ENCODE measurements at regions of chr3 and their contacts with region 1.

Region 1: GRCh38 chr3:187679638-187680396 is 9.6 kb upstream of the SST start:
- DNase-seq: peak; percentile 68
- H3K4me3 Mint-ChIP-seq: no peak overlapping the region
- H3K27ac Mint-ChIP-seq: no peak overlapping the region
- H3K4me1 Mint-ChIP-seq: peaks cover 2% of the 10 kb centered on the region
- H3K27me3 Mint-ChIP-seq: peaks cover 59% of the 10 kb centered on the region

Region 2: DNA sequence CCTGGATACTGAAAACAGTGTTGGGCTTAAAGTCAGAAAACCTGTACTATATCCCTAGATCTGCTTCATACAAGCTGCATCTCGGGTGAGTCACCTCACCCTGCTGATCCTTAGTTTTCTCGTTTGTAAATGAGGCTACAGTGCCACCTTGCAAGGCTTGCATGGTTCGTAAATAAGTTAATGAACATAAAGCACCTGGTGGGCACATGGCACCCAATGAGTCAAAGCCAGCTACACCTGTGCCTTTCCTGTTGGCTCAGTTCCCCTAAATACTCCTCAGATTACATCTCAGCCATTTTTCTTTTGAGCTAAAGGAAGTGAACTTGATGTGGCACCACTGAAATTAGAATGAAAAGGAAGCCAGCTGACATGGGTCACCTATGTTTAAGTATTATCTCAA is 456.0 kb before region 1 on chr3:
- CTCF ChIA-PET with region 1: interaction called, 32 read pairs
- POLR2A ChIA-PET with region 1: interaction called, 3 read pairs
- DNase-seq: no peak
- H3K4me3 Mint-ChIP-seq: no peak overlapping the region
- H3K27ac Mint-ChIP-seq: no peak overlapping the region
- H3K4me1 Mint-ChIP-seq: no peaks in the 10 kb centered on the region
- H3K27me3 Mint-ChIP-seq: peaks cover 6% of the 10 kb centered on the region

Region 3: DNA sequence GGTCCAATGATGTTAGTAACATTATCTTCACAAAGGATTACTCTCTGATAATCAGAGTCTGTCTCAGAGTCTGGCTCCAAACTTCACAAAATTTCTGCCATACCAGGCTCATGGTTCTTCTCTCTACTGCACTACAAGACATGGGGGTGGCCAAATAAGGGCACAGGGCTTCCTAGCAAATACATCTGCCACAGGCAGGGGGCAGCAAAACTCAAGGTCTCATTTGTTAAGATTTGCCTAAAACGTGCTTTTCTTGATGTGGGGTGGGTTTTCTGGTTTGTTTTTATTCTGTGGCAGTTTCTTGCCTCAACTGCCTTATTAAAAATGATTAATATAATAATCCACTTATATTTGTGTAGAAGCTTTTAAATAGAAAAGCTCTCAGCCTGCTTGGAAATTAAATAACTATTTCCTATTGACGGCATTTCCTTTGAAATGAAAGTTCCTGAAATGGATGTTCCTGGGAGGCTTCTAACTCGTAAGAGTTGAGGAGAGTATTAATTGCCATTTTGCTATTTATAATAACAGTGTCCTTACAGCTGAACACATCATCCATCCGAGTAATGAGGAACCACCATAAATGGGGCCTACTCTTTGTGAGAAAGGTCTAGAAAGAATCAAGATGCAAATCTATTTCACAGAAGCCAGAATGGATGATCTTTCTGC is 63.4 kb before region 1 on chr3:
- CTCF ChIA-PET with region 1: interaction called, 30 read pairs
- POLR2A ChIA-PET with region 1: interaction called, 3 read pairs
- DNase-seq: peak; percentile 57
- H3K4me3 Mint-ChIP-seq: no peak overlapping the region
- H3K27ac Mint-ChIP-seq: no peak overlapping the region
- H3K4me1 Mint-ChIP-seq: no peaks in the 10 kb centered on the region
- H3K27me3 Mint-ChIP-seq: peaks cover 20% of the 10 kb centered on the region

Region 4: DNA sequence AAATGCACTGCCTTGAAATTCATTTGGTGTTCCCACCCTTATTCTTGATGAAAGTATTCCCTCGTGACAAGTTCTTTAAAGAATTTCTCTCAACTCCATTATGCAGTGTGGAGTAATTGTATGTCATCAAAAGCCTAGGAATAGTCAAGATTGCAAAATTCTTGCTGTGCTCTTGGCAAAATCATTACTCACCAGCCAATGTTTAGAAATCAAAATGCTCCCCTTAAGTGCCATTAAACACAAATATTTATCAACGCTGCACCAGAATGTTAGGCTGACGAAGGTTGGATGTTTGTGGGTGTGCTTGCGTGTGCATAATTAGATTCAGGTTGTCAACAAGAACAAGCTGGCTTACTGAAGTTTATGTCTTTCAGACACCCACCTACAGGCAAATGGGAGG is 50.1 kb before region 1 on chr3:
- CTCF ChIA-PET with region 1: no interaction called
- POLR2A ChIA-PET with region 1: no interaction called
- DNase-seq: no peak
- H3K4me3 Mint-ChIP-seq: no peak overlapping the region
- H3K27ac Mint-ChIP-seq: no peak overlapping the region
- H3K4me1 Mint-ChIP-seq: no peaks in the 10 kb centered on the region
- H3K27me3 Mint-ChIP-seq: peaks cover 15% of the 10 kb centered on the region

Region 5: GRCh38 chr3:187662848-187663409 is 16.9 kb before region 1 on chr3:
- CTCF ChIA-PET with region 1: interaction called, 30 read pairs
- POLR2A ChIA-PET with region 1: no interaction called
- DNase-seq: no peak
- H3K4me3 Mint-ChIP-seq: no peak overlapping the region
- H3K27ac Mint-ChIP-seq: no peak overlapping the region
- H3K4me1 Mint-ChIP-seq: no peaks in the 10 kb centered on the region
- H3K27me3 Mint-ChIP-seq: peaks cover 40% of the 10 kb centered on the region

Region 6: GRCh38 chr3:187714404-187714979 is 34.7 kb after region 1 on chr3:
- CTCF ChIA-PET with region 1: interaction called, 24 read pairs
- POLR2A ChIA-PET with region 1: no interaction called
- DNase-seq: peak; percentile 79
- H3K4me3 Mint-ChIP-seq: no peak overlapping the region
- H3K27ac Mint-ChIP-seq: no peak overlapping the region
- H3K4me1 Mint-ChIP-seq: peaks cover 15% of the 10 kb centered on the region
- H3K27me3 Mint-ChIP-seq: peaks cover 6% of the 10 kb centered on the region

Measured in activated CD4-positive, alpha-beta memory T cell treated with anti-CD3 and anti-CD28 coated beads, Interleukin-2, amount 10 ng/mL, durations not matched to agents 7 days and 5 days (primary cell).